AG04450 (cell line): ENCODE measurements at regions of chr19 and their contacts with region 1.

Region 1: DNA sequence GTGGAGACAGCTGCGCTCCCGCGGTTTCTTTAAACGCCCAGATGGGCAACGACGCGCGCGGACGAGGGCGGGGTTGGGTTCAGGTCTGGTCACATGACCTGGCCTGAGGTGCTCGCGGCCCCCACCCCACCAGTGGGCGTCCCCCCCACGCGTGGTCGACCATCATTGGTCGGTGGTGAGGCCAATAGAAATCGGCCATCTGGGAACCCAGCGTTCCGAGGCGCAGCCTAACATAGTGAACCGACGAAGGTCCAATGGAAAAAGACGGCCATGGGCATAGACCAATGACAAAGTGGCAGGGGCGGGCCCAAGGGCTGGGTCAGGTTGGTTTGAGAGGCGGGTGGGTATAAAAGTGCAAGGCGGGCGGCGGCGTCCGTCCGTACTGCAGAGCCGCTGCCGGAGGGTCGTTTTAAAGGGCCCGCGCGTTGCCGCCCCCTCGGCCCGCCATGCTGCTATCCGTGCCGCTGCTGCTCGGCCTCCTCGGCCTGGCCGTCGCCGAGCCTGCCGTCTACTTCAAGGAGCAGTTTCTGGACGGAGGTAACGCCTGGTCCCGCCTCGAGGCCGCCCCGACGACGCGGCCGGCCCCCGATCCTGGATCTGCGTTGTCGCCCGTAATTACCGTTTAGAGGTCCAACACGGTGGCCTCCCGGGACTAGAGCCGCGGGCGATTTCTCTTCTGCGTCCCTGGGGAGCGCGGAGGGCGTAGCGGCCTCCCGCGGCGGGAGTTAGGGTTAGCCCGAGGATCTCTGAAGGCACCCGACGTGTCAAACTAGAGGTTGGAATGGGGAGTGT is at the start of gene CALR:
- DNase-seq: peak; percentile 99
- H3K4me3 ChIP-seq: peak within 1 kb of the TSS; percentile 99
- H3K27ac ChIP-seq: peak within 1 kb of the TSS; percentile 61
- H3K27me3 ChIP-seq: no peaks in the 10 kb centered on the region
- CTCF ChIP-seq: no peak; the same call in 1 of the 2 replicates
- polyA plus RNA-seq, gene CALR: 1,597 and 1,650 TPM in 2 replicates

Region 2: DNA sequence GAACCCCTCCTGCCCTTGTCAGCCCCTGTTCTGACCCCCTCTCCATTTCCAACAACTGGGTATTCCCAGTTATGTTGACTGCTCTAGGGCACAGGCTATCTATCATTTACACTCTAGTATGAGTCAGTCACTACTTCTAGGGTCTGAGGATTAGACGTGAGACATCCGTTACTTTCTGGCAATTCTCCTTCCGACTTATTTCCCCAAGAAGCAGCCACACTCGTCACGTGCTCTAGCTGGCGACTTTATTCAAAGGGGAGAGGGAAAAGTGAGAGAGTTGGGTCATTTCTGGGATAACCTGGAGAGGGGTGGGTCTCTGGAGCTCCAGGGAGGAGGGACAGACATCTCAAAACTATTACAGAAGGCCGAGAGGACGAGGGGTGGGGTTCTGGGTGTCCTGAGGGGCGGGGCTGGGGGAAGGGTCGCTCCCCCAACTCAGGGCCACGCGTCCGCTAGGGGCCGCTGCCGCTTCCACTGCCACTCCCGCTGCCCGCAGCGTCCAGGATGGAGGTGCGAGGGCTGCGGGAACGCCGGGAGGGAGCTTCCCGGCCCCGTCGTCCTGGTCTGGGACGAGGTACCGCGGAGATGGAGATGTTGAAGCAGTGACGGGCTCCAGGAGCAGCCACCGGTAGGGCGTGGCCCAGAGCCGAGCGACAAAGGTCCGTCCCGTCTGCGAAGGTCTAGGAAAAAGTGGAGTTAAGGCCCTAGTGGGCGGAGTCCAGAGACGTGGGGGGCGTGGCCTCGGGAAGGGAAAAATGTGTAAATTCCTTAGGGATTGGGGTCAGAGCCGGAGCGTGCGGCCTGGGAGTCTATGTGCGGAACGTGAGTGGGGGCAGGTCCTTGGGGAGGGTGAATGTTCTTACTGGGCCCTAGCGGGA is 112.9 kb before region 1 on chr19:
- CTCF ChIA-PET with region 1: no interaction called
- POLR2A ChIA-PET with region 1: interaction called, 10 read pairs
- DNase-seq: no peak
- H3K4me3 ChIP-seq: no peak overlapping the region
- H3K27ac ChIP-seq: no peak overlapping the region
- H3K27me3 ChIP-seq: peaks cover 9% of the 10 kb centered on the region
- CTCF ChIP-seq: peak; percentile 33; the same call in 1 of the 2 replicates

Region 3: DNA sequence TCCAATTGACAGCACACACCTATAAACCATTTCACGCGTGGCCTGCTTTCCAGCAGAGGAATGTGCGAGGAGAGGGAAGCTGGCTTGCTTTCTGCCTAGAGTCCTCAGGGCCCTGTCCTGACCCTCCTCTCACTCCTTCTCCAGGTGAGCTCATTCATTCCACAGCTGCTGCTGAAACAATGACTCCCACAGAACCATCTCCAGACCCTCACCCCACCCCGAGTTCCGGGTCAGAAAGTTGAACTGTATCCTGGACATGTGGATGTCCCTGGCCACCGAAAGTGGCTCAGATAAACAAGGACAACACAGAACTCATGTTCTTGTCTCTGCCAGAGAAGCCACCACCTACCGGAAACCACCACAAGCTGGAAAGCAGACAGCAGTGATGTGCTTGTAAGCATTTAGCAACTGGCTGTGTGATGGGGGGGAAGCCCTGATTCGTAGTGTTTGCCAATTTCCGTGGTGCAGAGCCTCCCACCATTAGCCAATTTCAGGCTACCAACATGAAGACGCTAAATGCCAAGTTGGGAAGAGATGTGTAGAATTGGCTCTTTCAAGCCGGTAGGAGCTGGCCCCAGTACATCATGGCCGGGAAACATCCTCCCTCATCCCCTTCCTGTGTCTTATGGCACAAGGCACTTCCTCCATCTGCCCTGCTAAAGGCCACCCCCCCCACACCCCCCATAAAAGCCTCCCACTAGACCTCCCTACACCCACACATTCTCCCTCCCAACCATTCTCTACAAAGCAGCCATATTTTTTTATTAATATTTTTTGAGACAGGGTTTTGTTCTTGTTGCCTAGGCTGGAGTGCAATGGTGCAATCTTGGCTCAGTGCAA is 24.4 kb before region 1 on chr19:
- CTCF ChIA-PET with region 1: no interaction called
- POLR2A ChIA-PET with region 1: interaction called, 10 read pairs
- DNase-seq: no peak
- H3K4me3 ChIP-seq: no peak overlapping the region
- H3K27ac ChIP-seq: no peak overlapping the region
- H3K27me3 ChIP-seq: no peaks in the 10 kb centered on the region
- CTCF ChIP-seq: no peak

Region 4: GRCh38 chr19:12921047-12921446 is 17.4 kb before region 1 on chr19:
- CTCF ChIA-PET with region 1: no interaction called
- POLR2A ChIA-PET with region 1: interaction called, 13 read pairs
- DNase-seq: no peak
- H3K4me3 ChIP-seq: no peak overlapping the region
- H3K27ac ChIP-seq: no peak overlapping the region
- H3K27me3 ChIP-seq: no peaks in the 10 kb centered on the region
- CTCF ChIP-seq: no peak